GM12878 (cell line): ENCODE measurements at regions of chr6 and their contacts with region 1.

Region 1: GRCh38 chr6:15682965-15683822 is 20.4 kb upstream of the DTNBP1 start:
- DNase-seq: peak; percentile 40
- ATAC-seq: peak; percentile 93
- H3K4me3 ChIP-seq: no peak overlapping the region
- H3K27ac ChIP-seq: no peak overlapping the region
- H3K4me1 ChIP-seq: 0 out of 2 replicates have a peak, but pooled peaks cover 3% of the 10 kb centered on the region
- H3K27me3 ChIP-seq: 0 out of 4 replicates have a peak, but pooled peaks cover 0 to 3% of the 10 kb centered on the region in 2 experiments
- CTCF ChIP-seq: no peak
- EP300 ChIP-seq: peak; percentile 57 to 68; a peak in 3 of 4 replicates
- POLR2A ChIP-seq: no peak
- RAD21 ChIP-seq: no peak

Region 2: DNA sequence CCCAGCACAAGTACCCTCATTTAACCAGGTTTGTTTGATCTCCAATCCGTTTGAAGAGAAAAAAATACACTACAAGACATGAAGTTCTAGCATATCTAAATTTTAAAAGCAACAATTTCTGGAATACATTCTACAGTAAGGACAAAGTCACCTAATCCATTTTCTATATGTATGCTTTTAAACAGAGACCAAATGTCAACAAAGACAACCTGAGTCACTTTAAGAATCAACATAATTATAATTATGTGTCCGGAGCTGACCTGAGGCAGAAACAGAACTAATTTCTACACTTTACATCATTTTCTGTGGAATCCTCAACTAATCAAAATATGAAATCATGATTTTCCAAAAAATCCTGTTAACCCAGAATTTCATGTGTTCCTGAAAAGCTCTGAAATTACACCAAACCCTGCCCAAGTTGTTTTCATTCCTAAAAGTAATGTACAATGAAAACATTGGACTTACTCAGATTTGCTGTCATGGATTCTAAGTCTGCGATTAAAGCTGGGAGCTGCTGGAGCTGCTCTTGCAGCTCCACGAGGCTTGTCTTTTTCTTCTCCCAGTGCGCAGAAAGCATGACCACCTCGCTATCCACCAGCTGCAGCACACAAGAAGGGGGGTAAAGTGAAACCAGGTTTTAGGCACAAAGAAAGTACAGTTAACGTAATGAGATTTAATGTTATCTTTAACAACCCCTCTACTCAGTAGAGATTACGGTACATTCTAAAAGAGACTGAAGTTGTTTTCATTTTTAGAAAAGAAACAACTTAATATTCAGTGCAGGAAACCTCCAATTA is 56.1 kb before region 1 on chr6:
- CTCF ChIA-PET with region 1: interaction called, 12 read pairs
- POLR2A ChIA-PET with region 1: no interaction called
- RAD21 ChIA-PET with region 1: interaction called, 3 read pairs
- SMC1A ChIA-PET with region 1: interaction called, 10 read pairs
- in situ Hi-C with region 1: no loop called
- intact Hi-C with region 1: no loop called
- DNase-seq: no peak
- ATAC-seq: no peak
- H3K4me3 ChIP-seq: no peak overlapping the region
- H3K27ac ChIP-seq: no peak overlapping the region
- H3K4me1 ChIP-seq: peaks cover 1% of the 10 kb centered on the region; the same call in 1 of the 2 replicates
- H3K27me3 ChIP-seq: no peaks in the 10 kb centered on the region
- CTCF ChIP-seq: no peak
- EP300 ChIP-seq: no peak
- POLR2A ChIP-seq: no peak
- RAD21 ChIP-seq: no peak

Region 3: GRCh38 chr6:15653581-15653980 is 29.6 kb before region 1 on chr6:
- CTCF ChIA-PET with region 1: interaction called, 14 read pairs
- POLR2A ChIA-PET with region 1: interaction called, 17 read pairs
- RAD21 ChIA-PET with region 1: interaction called, 19 read pairs
- SMC1A ChIA-PET with region 1: interaction called, 79 read pairs
- in situ Hi-C with region 1: no loop called
- intact Hi-C with region 1: no loop called
- DNase-seq: peak; percentile 36
- ATAC-seq: peak; percentile 74
- H3K4me3 ChIP-seq: no peak overlapping the region
- H3K27ac ChIP-seq: peak overlapping the region; percentile 1; the same call in 1 of the 2 replicates
- H3K4me1 ChIP-seq: peaks cover 23% of the 10 kb centered on the region
- H3K27me3 ChIP-seq: no peaks in the 10 kb centered on the region
- CTCF ChIP-seq: no peak
- EP300 ChIP-seq: no peak
- POLR2A ChIP-seq: no peak
- RAD21 ChIP-seq: no peak

Region 4: GRCh38 chr6:15662326-15663129 is 20.7 kb before region 1 on chr6 and contains the start of gene DTNBP1:
- CTCF ChIA-PET with region 1: interaction called, 14 read pairs
- POLR2A ChIA-PET with region 1: interaction called, 17 read pairs
- RAD21 ChIA-PET with region 1: interaction called, 19 read pairs
- SMC1A ChIA-PET with region 1: interaction called, 79 read pairs
- in situ Hi-C with region 1: no loop called
- intact Hi-C with region 1: no loop called
- DNase-seq: peak; percentile 40
- ATAC-seq: peak; percentile 85
- H3K4me3 ChIP-seq: peak within 1 kb of the TSS; percentile 90
- H3K27ac ChIP-seq: peak within 1 kb of the TSS; percentile 76
- H3K4me1 ChIP-seq: peaks cover 26% of the 10 kb centered on the region
- H3K27me3 ChIP-seq: no peaks in the 10 kb centered on the region; a peak in 1 of 4 replicates
- CTCF ChIP-seq: no peak
- EP300 ChIP-seq: no peak
- POLR2A ChIP-seq: peak; percentile 64
- RAD21 ChIP-seq: no peak
- polyA plus RNA-seq, gene DTNBP1: 10.9 to 20.2 TPM

Region 5: DNA sequence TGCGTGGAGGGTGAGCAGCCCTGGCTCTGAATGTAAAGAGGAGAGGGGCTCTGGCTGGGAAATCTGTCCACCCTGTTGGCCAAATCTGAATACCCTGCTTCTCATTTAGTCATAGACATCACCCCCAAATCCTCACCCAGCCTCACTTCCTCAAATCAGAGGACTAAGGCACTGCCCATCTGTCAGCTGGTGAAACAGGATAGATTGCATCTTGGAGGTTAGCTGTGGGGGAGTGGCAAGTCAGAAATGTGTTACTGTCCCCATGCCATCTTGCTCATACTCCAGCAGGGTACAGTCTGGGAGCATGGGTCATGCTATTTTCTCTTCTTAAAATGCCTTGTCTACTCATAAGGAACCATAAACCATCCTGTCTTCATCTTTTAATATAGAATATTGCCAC is 10.9 kb before region 1 on chr6:
- CTCF ChIA-PET with region 1: interaction called, 13 read pairs
- POLR2A ChIA-PET with region 1: interaction called, 9 read pairs
- RAD21 ChIA-PET with region 1: interaction called, 3 read pairs
- SMC1A ChIA-PET with region 1: interaction called, 20 read pairs
- in situ Hi-C with region 1: no loop called
- intact Hi-C with region 1: no loop called
- DNase-seq: no peak
- ATAC-seq: peak; percentile 34; the same call in 2 of the 3 replicates
- H3K4me3 ChIP-seq: no peak overlapping the region
- H3K27ac ChIP-seq: no peak overlapping the region
- H3K4me1 ChIP-seq: no peaks in the 10 kb centered on the region
- H3K27me3 ChIP-seq: peaks cover 0 to 2% of the 10 kb centered on the region in 2 experiments; a peak in 2 of 4 replicates
- CTCF ChIP-seq: no peak
- EP300 ChIP-seq: no peak
- POLR2A ChIP-seq: no peak
- RAD21 ChIP-seq: no peak

Region 6: GRCh38 chr6:15735567-15736265 is 52.5 kb after region 1 on chr6:
- CTCF ChIA-PET with region 1: no interaction called
- POLR2A ChIA-PET with region 1: no interaction called
- RAD21 ChIA-PET with region 1: interaction called, 16 read pairs
- SMC1A ChIA-PET with region 1: interaction called, 5 read pairs
- in situ Hi-C with region 1: no loop called
- intact Hi-C with region 1: no loop called
- DNase-seq: no peak
- ATAC-seq: peak; percentile 74
- H3K4me3 ChIP-seq: no peak overlapping the region
- H3K27ac ChIP-seq: no peak overlapping the region
- H3K4me1 ChIP-seq: peaks cover 4% of the 10 kb centered on the region; the same call in 1 of the 2 replicates
- H3K27me3 ChIP-seq: no peaks in the 10 kb centered on the region
- CTCF ChIP-seq: no peak
- EP300 ChIP-seq: peak; percentile 60 to 74; a peak in 3 of 4 replicates
- POLR2A ChIP-seq: no peak
- RAD21 ChIP-seq: no peak